ENCODE measurements at regions of chrX and their contacts with region 1.

Region 1: GRCh38 chrX:47193475-47194193 is at the start of gene UBA1:
- DNase-seq: peak; percentile 94
- ATAC-seq: peak; percentile 69
- H3K4me3 Mint-ChIP-seq: peak within 1 kb of the TSS; percentile 91
- H3K27ac Mint-ChIP-seq: peak within 1 kb of the TSS; percentile 92
- H3K4me1 Mint-ChIP-seq: peaks cover 54% of the 10 kb centered on the region
- H3K27me3 Mint-ChIP-seq: no peaks in the 10 kb centered on the region
- total RNA-seq, gene UBA1: 224 to 249 TPM

Region 2: DNA sequence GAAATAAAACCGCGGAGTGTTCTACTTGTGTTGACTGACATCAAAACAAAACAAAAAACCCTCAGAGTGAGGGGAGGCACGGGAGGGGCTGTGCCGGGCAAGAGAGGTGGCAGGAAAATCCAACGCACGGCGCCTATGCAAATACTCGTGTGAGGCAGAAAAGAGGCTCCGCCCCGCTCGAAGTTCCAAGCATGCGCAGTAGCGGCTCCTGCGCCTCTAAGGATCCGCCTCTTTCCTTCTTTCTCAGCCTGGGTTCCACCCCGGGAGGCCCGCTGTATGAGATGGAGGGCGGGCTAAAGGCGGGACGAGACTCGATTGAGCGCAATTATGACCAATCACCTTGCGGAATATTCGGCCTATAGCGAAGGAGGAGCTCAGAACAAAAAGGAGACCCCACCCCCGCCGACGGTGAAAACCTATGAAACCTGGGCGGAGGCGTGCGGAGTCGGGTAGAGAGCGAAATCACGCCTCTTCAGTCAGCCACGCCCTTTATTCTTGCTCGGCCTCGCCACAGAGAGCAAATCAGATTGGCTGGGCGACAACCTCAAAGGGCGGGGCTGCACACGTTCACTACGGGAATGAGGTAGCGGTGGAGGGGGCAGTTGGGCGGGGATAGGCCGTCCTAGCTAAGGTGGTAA is 24.1 kb after region 1 on chrX:
- CTCF ChIA-PET with region 1: interaction called, 3 read pairs
- POLR2A ChIA-PET with region 1: interaction called, 8 read pairs
- intact Hi-C with region 1: loop called (anchors 1 kb)
- DNase-seq: peak; percentile 96
- ATAC-seq: peak; percentile 87
- H3K4me3 Mint-ChIP-seq: peak overlapping the region; percentile 92
- H3K27ac Mint-ChIP-seq: peak overlapping the region; percentile 99
- H3K4me1 Mint-ChIP-seq: peaks cover 35% of the 10 kb centered on the region
- H3K27me3 Mint-ChIP-seq: no peaks in the 10 kb centered on the region

Region 3: DNA sequence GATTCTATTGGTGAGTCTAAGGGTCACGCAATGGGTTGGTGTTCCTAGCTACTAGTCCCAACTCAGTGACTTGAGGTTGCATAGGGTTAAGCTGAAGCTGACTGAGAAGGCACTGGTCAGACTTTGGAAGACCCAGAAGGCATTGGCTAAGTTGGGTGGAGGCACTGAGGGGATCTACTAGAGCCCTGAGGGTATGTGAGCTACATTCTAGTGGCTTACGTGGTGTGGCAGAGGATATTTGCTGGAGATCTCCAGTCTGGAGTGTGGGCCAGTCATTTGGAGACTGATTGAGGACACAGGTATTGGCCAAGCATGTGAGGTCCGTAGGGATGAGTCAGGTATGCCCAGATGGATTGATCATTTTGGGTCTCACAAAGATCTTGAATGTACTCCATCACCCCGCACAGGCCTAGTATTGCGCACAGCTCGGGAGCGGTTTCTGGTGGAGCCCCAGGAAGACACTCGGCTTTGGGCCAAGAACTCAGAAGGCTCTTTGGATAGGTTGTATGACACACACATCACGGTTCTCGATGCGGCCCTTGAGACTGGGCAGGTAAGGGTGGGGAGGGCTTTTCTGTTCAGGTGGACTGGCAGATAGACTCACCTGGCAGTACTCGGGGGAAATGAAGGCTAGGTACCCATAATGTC is 46.4 kb after region 1 on chrX:
- CTCF ChIA-PET with region 1: no interaction called
- POLR2A ChIA-PET with region 1: no interaction called
- intact Hi-C with region 1: no loop called
- DNase-seq: no peak
- ATAC-seq: no peak
- H3K4me3 Mint-ChIP-seq: no peak overlapping the region
- H3K27ac Mint-ChIP-seq: no peak overlapping the region
- H3K4me1 Mint-ChIP-seq: peaks cover 19% of the 10 kb centered on the region
- H3K27me3 Mint-ChIP-seq: no peaks in the 10 kb centered on the region

Region 4: DNA sequence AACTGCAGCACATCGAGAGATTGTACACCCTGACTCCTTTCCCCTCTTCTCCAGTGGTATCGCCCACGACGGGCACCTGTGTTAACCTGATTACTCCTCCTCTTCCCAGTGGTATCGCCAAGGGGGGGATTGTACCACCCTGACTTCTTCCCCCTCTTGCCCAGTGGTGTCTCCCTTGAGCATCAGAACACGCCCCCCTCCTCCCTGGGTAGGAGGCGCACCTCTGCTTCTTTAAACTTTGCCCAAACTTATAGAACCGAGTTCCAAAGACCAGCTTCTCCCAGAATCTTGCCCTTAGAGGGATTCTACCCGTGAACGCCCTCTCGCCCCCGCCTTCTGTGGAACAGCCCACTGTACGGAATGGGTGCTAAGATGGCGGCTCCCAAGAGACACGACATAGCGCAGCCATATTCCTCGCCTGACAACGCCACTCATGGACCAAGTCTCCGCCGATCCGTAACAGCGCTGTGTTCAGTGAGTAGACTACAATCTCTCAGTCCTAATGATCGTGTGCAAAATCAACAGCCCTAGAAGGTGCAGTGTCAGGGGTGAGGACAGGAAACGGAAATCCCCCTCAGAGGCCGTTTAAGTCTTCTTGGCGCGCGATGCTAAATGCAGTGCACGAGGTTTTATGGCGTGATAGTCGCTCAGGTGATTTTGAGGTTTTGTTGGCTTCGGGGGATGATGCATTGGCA is 172.5 kb after region 1 on chrX:
- CTCF ChIA-PET with region 1: interaction called, 3 read pairs
- POLR2A ChIA-PET with region 1: no interaction called
- intact Hi-C with region 1: loop called in 1 of 2 experiments (anchors 1 kb)
- DNase-seq: peak; percentile 80
- ATAC-seq: peak; percentile 94
- H3K4me3 Mint-ChIP-seq: peak overlapping the region; percentile 80
- H3K27ac Mint-ChIP-seq: peak overlapping the region; percentile 93
- H3K4me1 Mint-ChIP-seq: peaks cover 15% of the 10 kb centered on the region
- H3K27me3 Mint-ChIP-seq: no peaks in the 10 kb centered on the region

Region 5: GRCh38 chrX:47523297-47523696 is 329.7 kb after region 1 on chrX:
- CTCF ChIA-PET with region 1: interaction called, 6 read pairs
- POLR2A ChIA-PET with region 1: no interaction called
- intact Hi-C with region 1: loop called (anchors 1 kb)
- DNase-seq: peak; percentile 88
- ATAC-seq: peak; percentile 99
- H3K4me3 Mint-ChIP-seq: peak overlapping the region; percentile 60
- H3K27ac Mint-ChIP-seq: no peak overlapping the region
- H3K4me1 Mint-ChIP-seq: no peaks in the 10 kb centered on the region
- H3K27me3 Mint-ChIP-seq: no peaks in the 10 kb centered on the region

Region 6: DNA sequence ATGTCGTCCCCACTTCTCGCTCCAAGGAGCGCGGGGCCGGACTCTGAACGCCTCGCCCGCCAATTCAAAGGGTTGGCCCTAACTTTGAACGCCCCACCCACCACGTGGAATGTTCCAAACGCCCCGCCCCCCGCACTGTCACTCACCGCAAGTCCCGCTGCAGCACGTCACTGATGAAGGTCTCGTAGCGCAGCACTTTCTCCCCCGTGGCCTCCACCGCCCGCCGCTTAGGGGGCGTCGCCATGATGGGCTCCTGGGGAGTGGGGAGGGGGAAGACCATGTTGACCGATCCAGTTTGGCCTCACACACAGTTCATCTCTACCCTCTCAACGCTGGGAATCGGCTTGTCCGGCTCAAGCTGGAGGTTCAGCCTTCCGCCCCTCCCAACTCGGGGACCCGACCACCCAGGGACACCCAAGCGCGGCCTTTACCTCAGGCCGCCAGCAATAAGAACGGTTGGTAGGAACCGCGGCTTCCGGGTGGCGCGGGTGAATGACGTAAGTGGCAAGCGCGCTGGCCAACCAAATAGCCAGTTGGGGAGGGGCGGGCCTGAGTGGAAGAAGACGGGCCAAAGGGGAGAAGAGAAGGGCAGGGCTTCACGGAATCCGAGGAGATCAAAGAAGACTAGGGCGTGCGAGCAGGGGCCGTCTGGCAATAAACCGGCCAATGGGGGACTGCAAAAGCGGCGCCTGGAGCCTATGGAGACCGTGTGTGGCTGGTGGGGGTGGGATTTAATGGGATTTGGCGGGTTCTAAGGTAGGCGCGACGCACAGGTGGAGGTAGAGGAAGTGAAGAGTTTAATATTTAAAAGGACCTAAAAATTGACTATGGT is 465.3 kb after region 1 on chrX and contains the start of gene UXT:
- CTCF ChIA-PET with region 1: no interaction called
- POLR2A ChIA-PET with region 1: no interaction called
- intact Hi-C with region 1: loop called (anchors 5 kb)
- DNase-seq: peak; percentile 96
- ATAC-seq: peak; percentile 83
- H3K4me3 Mint-ChIP-seq: peak within 1 kb of the TSS; percentile 86
- H3K27ac Mint-ChIP-seq: peak within 1 kb of the TSS; percentile 94
- H3K4me1 Mint-ChIP-seq: peaks cover 52% of the 10 kb centered on the region
- H3K27me3 Mint-ChIP-seq: no peaks in the 10 kb centered on the region
- total RNA-seq, gene UXT: 195 to 210 TPM

Region 7: GRCh38 chrX:48021026-48021900 is 827.6 kb after region 1 on chrX:
- CTCF ChIA-PET with region 1: no interaction called
- POLR2A ChIA-PET with region 1: no interaction called
- intact Hi-C with region 1: loop called in 1 of 2 experiments (anchors 10 kb)
- DNase-seq: peak; percentile 84
- ATAC-seq: peak; percentile 57
- H3K4me3 Mint-ChIP-seq: peak overlapping the region; percentile 85
- H3K27ac Mint-ChIP-seq: peak overlapping the region; percentile 99
- H3K4me1 Mint-ChIP-seq: peaks cover 14% of the 10 kb centered on the region
- H3K27me3 Mint-ChIP-seq: no peaks in the 10 kb centered on the region